Activated CD4-positive, alpha-beta T cell treated with anti-CD3 and anti-CD28 coated beads, Interleukin-2, amount 10 ng/mL, durations not matched to agents 7 days and 5 days (primary cell): ENCODE measurements at regions of chrX and their contacts with region 1.

Region 1: DNA sequence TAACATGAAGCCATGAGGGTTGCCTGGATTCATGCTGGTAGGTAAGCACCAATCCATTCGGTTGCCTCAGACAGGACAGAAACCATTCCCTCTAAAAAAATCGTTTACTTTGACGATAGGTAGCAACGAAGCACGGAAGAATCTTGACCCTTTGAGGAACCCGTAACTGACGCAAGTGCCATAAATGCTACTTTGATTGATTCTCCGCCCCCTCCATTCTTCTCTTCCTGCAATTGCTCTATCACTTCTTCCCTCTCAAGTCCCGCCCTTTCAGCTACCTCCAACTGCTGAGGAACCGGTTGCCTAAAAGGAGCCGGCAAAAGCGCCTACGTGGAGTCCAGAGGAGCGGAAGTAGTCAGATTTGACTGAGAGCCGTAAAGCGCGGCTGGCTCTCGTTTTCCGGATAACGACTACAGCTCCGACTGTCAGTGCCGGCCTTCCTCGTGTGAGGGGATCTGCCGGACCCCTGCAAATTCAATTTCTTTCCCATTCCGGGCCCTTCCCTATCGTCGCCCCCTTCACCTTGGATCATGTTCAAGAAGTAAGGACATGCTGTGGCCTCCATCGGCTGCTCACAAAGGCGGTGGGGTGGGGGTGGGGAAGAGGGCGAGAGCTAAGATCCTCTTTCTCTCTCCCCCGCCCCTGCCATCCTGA is at the start of gene MCTS1:
- DNase-seq: peak; percentile 90
- H3K4me3 Mint-ChIP-seq: peak within 1 kb of the TSS; percentile 99
- H3K27ac Mint-ChIP-seq: peak within 1 kb of the TSS; percentile 100
- H3K4me1 Mint-ChIP-seq: peaks cover 9% of the 10 kb centered on the region
- H3K27me3 Mint-ChIP-seq: no peaks in the 10 kb centered on the region
- total RNA-seq, gene MCTS1: 51.1 to 59.0 TPM

Region 2: GRCh38 chrX:120560842-120561633 is 42.8 kb before region 1 on chrX and contains the start of gene CUL4B:
- CTCF ChIA-PET with region 1: interaction called, 5 read pairs
- POLR2A ChIA-PET with region 1: interaction called, 14 read pairs
- DNase-seq: peak; percentile 94
- H3K4me3 Mint-ChIP-seq: peak within 1 kb of the TSS; percentile 99
- H3K27ac Mint-ChIP-seq: peak within 1 kb of the TSS; percentile 99
- H3K4me1 Mint-ChIP-seq: peaks cover 26% of the 10 kb centered on the region
- H3K27me3 Mint-ChIP-seq: no peaks in the 10 kb centered on the region
- total RNA-seq, gene CUL4B: 44.8 to 46.2 TPM